A673 (cell line): ENCODE measurements at regions of chr1 and their contacts with region 1.

Region 1: DNA sequence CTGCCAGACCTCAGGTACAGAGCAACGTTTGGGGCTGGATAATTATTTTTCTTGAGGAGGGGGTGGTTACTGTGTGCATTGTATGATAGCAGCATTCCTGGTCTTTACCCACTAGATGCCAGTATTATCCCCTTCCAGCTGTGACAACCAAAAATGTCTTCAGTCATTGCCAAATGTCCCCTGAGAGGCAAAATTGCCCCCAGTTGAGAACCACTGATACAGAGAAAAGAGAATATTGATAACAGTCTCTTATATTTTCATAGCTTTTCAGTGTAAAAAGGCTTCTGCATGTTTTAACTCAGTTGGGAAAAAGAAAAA is 51.8 kb upstream of the SYT14 start:
- DNase-seq: peak; percentile 71
- H3K4me3 ChIP-seq: no peak overlapping the region
- H3K27ac ChIP-seq: no peak overlapping the region
- H3K4me1 ChIP-seq: peaks cover 49% of the 10 kb centered on the region
- H3K27me3 ChIP-seq: no peaks in the 10 kb centered on the region
- CTCF ChIP-seq: peak; percentile 61

Region 2: DNA sequence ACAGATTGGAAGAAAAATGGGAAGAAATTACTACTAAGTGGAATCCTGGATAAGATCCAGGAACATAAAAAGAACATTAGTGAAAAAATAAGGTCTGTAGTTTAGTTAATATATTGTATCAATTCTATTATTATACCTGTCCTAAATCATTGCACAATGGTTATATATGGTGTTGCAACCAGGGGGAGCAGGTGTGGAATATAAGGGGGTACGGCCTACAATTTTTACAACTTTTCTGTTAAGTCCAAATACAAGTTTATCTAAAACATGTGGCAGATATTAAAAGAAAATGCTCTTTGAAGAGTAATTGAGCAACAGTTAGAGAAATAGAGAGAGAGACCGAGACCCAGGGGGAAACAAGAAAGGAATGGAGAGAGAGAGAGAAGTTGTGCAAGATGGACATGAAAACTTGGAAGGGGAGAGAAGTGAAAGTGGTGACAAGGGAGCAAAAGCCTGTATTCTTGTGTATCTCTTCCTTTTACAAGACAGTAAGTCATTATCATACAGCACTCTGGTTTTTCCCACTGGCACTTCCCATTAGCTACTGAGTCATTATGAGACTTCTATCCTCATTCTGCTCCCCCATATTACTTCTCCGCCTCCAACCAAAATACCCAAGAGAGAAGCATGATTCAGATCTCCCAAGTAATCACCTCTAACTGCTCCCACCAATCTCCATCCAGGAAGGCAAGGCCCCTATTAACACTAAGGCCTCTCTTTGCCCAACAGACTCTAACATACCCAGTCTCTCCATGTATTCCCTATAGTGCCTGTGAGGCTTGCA is 152.6 kb before region 1 on chr1:
- CTCF ChIA-PET with region 1: no interaction called
- POLR2A ChIA-PET with region 1: no interaction called
- intact Hi-C with region 1: no loop called
- DNase-seq: no peak
- H3K4me3 ChIP-seq: no peak overlapping the region
- H3K27ac ChIP-seq: no peak overlapping the region
- H3K4me1 ChIP-seq: no peaks in the 10 kb centered on the region
- H3K27me3 ChIP-seq: no peaks in the 10 kb centered on the region
- CTCF ChIP-seq: no peak

Region 3: DNA sequence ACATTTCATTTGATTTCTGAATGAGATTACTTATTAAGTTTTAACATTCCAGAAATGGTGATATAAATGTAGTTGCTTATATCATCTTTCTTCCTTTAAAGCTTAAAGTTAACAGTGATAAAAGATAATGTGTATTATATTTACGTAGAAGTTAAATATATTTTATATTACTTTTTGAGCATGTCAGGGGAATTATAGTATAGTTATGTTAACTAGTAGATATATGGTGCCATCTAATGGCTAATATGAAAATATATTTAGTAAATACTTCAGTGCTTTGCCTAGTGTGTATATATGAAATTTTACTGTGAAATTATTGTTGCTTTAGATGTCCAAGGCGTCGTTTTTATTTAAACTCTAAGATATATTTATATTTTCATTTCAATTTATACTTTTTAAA is 103.3 kb after region 1 on chr1:
- CTCF ChIA-PET with region 1: no interaction called
- POLR2A ChIA-PET with region 1: no interaction called
- intact Hi-C with region 1: loop called (anchors 1 kb)
- DNase-seq: peak; percentile 58
- H3K4me3 ChIP-seq: no peak overlapping the region
- H3K27ac ChIP-seq: peak overlapping the region; percentile 14
- H3K4me1 ChIP-seq: peaks cover 23% of the 10 kb centered on the region
- H3K27me3 ChIP-seq: no peaks in the 10 kb centered on the region
- CTCF ChIP-seq: peak; percentile 64